ENCODE measurements at regions of chr5 and their contacts with region 1.

Region 1: DNA sequence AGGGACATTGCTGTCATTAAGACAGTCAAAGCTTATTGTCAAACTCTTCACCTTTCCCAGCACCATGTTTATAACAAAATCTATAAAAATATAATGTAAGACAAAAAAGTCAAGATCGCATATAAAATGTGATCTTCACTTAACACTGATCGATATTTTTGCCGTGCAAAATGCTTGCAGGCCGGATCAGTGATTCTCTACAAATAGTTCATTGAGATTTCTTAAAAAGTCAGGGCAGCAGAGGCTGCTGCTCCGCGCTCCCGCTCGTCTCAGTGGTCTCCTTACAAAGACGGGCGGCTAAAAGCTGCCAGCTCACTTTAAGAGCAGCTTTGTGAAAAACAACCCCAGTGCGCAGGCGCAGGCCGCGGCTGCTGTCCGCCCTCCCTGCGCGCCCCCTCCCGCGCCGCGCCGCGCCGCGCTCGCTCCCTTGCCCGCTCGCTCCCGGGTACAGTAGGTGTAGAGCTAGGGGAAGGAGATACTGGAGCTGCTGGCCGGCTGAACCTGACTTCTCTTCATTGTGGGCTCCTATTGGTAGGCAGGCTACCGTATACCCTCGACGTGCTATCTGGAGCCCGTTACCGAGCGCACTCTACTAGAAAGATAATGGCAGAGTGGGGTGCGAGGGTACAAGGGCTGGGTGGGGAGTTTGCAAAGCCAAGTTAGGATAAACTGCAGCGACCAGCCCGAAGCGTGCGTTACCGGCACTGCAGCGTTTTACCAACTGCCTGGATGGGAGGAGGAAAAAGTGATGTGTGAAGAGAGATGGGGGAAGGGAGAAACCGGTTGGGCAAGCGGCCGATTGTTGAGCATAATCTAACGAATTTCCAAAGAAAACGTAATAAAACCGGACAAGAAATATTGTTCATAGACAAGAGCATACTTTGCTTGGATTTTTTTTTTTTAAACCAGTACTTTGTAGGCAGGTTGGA is at the start of gene ARRDC3:
- DNase-seq: peak; percentile 97
- ATAC-seq: peak; percentile 49
- H3K4me3 ChIP-seq: peak within 1 kb of the TSS; percentile 76 to 98 (median 98)
- H3K4me3 Mint-ChIP-seq: peak within 1 kb of the TSS; percentile 88
- H3K27ac ChIP-seq: peak within 1 kb of the TSS; percentile 99 to 100
- H3K27ac Mint-ChIP-seq: peak within 1 kb of the TSS; percentile 99
- H3K4me1 ChIP-seq: peaks cover 15 to 17% of the 10 kb centered on the region in 2 donors
- H3K4me1 Mint-ChIP-seq: peaks cover 25% of the 10 kb centered on the region
- H3K27me3 ChIP-seq: no peaks in the 10 kb centered on the region
- H3K27me3 Mint-ChIP-seq: no peaks in the 10 kb centered on the region
- CTCF ChIP-seq: no peak
- total RNA-seq, gene ARRDC3: 84.9 and 95.4 TPM in 2 replicates

Region 2: DNA sequence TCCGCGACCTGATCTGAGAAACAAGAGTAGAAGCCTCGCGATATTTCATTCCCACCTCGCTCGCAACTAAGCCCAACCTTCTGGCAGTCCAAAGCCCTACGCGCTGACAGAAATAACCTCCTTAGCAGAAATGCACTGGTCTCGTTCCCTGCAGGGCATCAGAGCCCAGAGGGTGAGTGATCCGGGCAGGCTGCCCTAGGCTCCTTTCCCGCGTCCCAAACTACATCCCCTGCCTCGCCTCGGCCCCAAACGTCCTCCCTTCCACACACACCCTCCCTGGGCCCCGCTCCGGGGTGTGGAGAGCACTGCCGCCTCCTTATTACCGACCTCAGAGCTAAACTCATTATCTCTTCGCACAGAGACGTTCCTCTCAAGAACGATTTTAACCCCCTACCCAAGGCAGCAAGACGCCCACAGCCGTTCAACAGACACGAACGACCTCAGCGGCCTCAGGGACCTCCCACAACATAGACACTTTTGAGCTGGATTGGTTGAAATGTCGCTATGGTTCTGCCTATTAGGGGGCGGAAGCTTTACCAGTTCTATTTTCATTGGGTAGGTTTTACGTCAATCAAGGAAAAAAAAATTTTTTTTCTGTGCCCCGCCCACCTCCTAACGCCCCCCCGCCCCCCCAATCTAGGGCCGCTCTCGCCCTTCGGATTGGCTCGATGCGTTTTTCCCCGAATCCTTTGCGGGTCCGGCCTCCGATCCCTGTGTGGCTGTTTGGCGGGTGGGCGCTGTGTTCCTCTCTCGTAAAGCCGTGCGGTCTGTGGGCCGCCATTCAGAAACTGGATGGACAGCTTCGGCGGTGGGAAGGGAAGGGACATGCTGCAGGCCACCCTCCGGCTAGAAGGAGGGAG is 973.7 kb before region 1 on chr5 and contains the start of gene CETN3:
- CTCF ChIA-PET with region 1: no interaction called
- POLR2A ChIA-PET with region 1: interaction called, 11 read pairs
- intact Hi-C with region 1: no loop called
- DNase-seq: peak; percentile 95
- ATAC-seq: peak; percentile 92
- H3K4me3 ChIP-seq: peak within 1 kb of the TSS; percentile 93 to 100 (median 98)
- H3K4me3 Mint-ChIP-seq: no peak within 1 kb of the TSS
- H3K27ac ChIP-seq: peak within 1 kb of the TSS; percentile 91 to 94
- H3K27ac Mint-ChIP-seq: no peak within 1 kb of the TSS
- H3K4me1 ChIP-seq: peaks cover 11 to 12% of the 10 kb centered on the region in 2 donors
- H3K4me1 Mint-ChIP-seq: peaks cover 5% of the 10 kb centered on the region
- H3K27me3 ChIP-seq: no peaks in the 10 kb centered on the region
- H3K27me3 Mint-ChIP-seq: no peaks in the 10 kb centered on the region
- CTCF ChIP-seq: no peak
- total RNA-seq, gene CETN3: 17.0 and 18.0 TPM in 2 replicates

Region 3: GRCh38 chr5:90932052-90932699 is 451.1 kb before region 1 on chr5:
- CTCF ChIA-PET with region 1: interaction called, 44 read pairs
- POLR2A ChIA-PET with region 1: no interaction called
- intact Hi-C with region 1: no loop called
- DNase-seq: peak; percentile 39
- ATAC-seq: no peak
- H3K4me3 ChIP-seq: no peak overlapping the region
- H3K4me3 Mint-ChIP-seq: no peak overlapping the region
- H3K27ac ChIP-seq: no peak overlapping the region
- H3K27ac Mint-ChIP-seq: no peak overlapping the region
- H3K4me1 ChIP-seq: no peaks in the 10 kb centered on the region
- H3K4me1 Mint-ChIP-seq: no peaks in the 10 kb centered on the region
- H3K27me3 ChIP-seq: peaks cover 0 to 5% (median 0%) of the 10 kb centered on the region in 4 experiments
- H3K27me3 Mint-ChIP-seq: peaks cover 10% of the 10 kb centered on the region
- CTCF ChIP-seq: peak; percentile 70

Region 4: GRCh38 chr5:91126448-91126847 is 256.8 kb before region 1 on chr5:
- CTCF ChIA-PET with region 1: no interaction called
- POLR2A ChIA-PET with region 1: no interaction called
- intact Hi-C with region 1: no loop called
- DNase-seq: no peak
- ATAC-seq: no peak
- H3K4me3 ChIP-seq: no peak overlapping the region
- H3K4me3 Mint-ChIP-seq: no peak overlapping the region
- H3K27ac ChIP-seq: no peak overlapping the region
- H3K27ac Mint-ChIP-seq: no peak overlapping the region
- H3K4me1 ChIP-seq: no peaks in the 10 kb centered on the region
- H3K4me1 Mint-ChIP-seq: no peaks in the 10 kb centered on the region
- H3K27me3 ChIP-seq: no peaks in the 10 kb centered on the region
- H3K27me3 Mint-ChIP-seq: peaks cover 7% of the 10 kb centered on the region
- CTCF ChIP-seq: no peak

Region 5: DNA sequence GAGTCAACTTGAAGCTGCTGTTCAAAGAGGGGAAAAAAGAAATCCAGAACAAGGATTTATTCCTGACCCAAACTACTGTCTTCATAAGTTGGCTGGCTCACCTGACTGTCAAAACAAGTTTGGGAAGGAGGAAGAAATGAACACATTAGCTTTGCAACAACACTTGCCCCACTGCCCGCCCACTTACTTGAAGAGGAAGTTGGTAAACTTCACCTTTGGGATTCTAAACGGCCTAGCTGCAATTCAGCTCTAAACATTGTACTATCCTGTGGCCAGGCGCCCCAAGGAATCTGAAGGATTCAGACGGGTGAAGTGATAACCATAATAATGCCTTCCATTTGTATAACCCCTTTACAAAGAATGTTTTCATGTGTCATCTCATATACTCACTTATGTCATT is 199.6 kb before region 1 on chr5:
- CTCF ChIA-PET with region 1: interaction called, 32 read pairs
- POLR2A ChIA-PET with region 1: no interaction called
- intact Hi-C with region 1: no loop called
- DNase-seq: no peak
- ATAC-seq: no peak
- H3K4me3 ChIP-seq: no peak overlapping the region
- H3K4me3 Mint-ChIP-seq: no peak overlapping the region
- H3K27ac ChIP-seq: no peak overlapping the region
- H3K27ac Mint-ChIP-seq: no peak overlapping the region
- H3K4me1 ChIP-seq: peaks cover 19 to 20% of the 10 kb centered on the region in 2 donors
- H3K4me1 Mint-ChIP-seq: peaks cover 19% of the 10 kb centered on the region
- H3K27me3 ChIP-seq: no peaks in the 10 kb centered on the region
- H3K27me3 Mint-ChIP-seq: peaks cover 10% of the 10 kb centered on the region
- CTCF ChIP-seq: no peak

Region 6: GRCh38 chr5:91225848-91226686 is 157.2 kb before region 1 on chr5:
- CTCF ChIA-PET with region 1: interaction called, 195 read pairs
- POLR2A ChIA-PET with region 1: interaction called, 15 read pairs
- intact Hi-C with region 1: loop called (anchors 1 kb)
- DNase-seq: peak; percentile 59
- ATAC-seq: peak; percentile 63
- H3K4me3 ChIP-seq: no peak overlapping the region
- H3K4me3 Mint-ChIP-seq: no peak overlapping the region
- H3K27ac ChIP-seq: no peak overlapping the region
- H3K27ac Mint-ChIP-seq: no peak overlapping the region
- H3K4me1 ChIP-seq: no peaks in the 10 kb centered on the region
- H3K4me1 Mint-ChIP-seq: no peaks in the 10 kb centered on the region
- H3K27me3 ChIP-seq: peaks cover 0 to 4% (median 2%) of the 10 kb centered on the region in 4 experiments
- H3K27me3 Mint-ChIP-seq: peaks cover 9% of the 10 kb centered on the region
- CTCF ChIP-seq: peak; percentile 62

Region 7: GRCh38 chr5:91311697-91312501 is 71.4 kb before region 1 on chr5:
- CTCF ChIA-PET with region 1: interaction called, 22 read pairs
- POLR2A ChIA-PET with region 1: interaction called, 15 read pairs
- intact Hi-C with region 1: loop called (anchors 1 kb)
- DNase-seq: peak; percentile 72
- ATAC-seq: peak; percentile 88
- H3K4me3 ChIP-seq: peak overlapping the region in 1 of 5 experiments; percentile 63
- H3K4me3 Mint-ChIP-seq: peak overlapping the region; percentile 77
- H3K27ac ChIP-seq: peak overlapping the region; percentile 46 to 67
- H3K27ac Mint-ChIP-seq: peak overlapping the region; percentile 89
- H3K4me1 ChIP-seq: peaks cover 36 to 37% of the 10 kb centered on the region in 2 donors
- H3K4me1 Mint-ChIP-seq: peaks cover 47% of the 10 kb centered on the region
- H3K27me3 ChIP-seq: no peaks in the 10 kb centered on the region
- H3K27me3 Mint-ChIP-seq: no peaks in the 10 kb centered on the region
- CTCF ChIP-seq: no peak

Region 8: DNA sequence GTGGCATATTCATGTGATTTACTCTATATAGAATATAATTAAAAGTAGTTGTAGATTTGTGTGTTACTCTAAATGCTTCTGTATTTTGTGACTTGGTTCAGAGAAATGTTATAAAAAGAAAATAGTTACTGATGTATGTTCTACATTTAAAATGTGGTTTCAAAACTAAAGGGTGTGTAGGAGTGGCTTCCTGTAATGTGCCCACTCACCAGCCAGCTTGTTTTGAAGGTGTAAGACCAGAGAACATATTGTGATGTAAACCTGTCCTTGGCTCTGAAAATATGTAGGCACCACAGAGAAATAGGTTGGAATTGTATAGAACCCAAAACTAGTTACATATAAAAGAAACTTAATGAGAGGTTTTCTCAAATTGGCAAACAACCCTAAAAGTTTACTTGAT is 51.1 kb after region 1 on chr5:
- CTCF ChIA-PET with region 1: no interaction called
- POLR2A ChIA-PET with region 1: no interaction called
- intact Hi-C with region 1: no loop called
- DNase-seq: no peak
- ATAC-seq: no peak
- H3K4me3 ChIP-seq: no peak overlapping the region
- H3K4me3 Mint-ChIP-seq: no peak overlapping the region
- H3K27ac ChIP-seq: peak overlapping the region; percentile 4 to 41
- H3K27ac Mint-ChIP-seq: no peak overlapping the region
- H3K4me1 ChIP-seq: peaks cover 4 to 13% of the 10 kb centered on the region in 2 donors
- H3K4me1 Mint-ChIP-seq: peaks cover 13% of the 10 kb centered on the region
- H3K27me3 ChIP-seq: no peaks in the 10 kb centered on the region
- H3K27me3 Mint-ChIP-seq: no peaks in the 10 kb centered on the region
- CTCF ChIP-seq: no peak

Region 9: GRCh38 chr5:92513067-92513466 is 1129.8 kb after region 1 on chr5:
- CTCF ChIA-PET with region 1: no interaction called
- POLR2A ChIA-PET with region 1: no interaction called
- intact Hi-C with region 1: no loop called
- DNase-seq: no peak
- ATAC-seq: no peak
- H3K4me3 ChIP-seq: no peak overlapping the region
- H3K4me3 Mint-ChIP-seq: no peak overlapping the region
- H3K27ac ChIP-seq: no peak overlapping the region
- H3K27ac Mint-ChIP-seq: no peak overlapping the region
- H3K4me1 ChIP-seq: no peaks in the 10 kb centered on the region
- H3K4me1 Mint-ChIP-seq: no peaks in the 10 kb centered on the region
- H3K27me3 ChIP-seq: no peaks in the 10 kb centered on the region
- H3K27me3 Mint-ChIP-seq: no peaks in the 10 kb centered on the region
- CTCF ChIP-seq: no peak